ENCODE measurements at regions of chr18 and their contacts with region 1.

Region 1: GRCh38 chr18:77132371-77133050 is at the start of gene MBP:
- DNase-seq: peak; percentile 64 to 79
- ATAC-seq: peak; percentile 43
- H3K4me3 ChIP-seq: peak within 1 kb of the TSS; percentile 76 to 92 (median 87)
- H3K27ac ChIP-seq: peak within 1 kb of the TSS; percentile 92 to 98 (median 95)
- H3K4me1 ChIP-seq: peaks cover 44 to 51% of the 10 kb centered on the region in 2 donors
- H3K27me3 ChIP-seq: no peaks in the 10 kb centered on the region
- CTCF ChIP-seq: no peak
- POLR2A ChIP-seq: peak; percentile 96
- total RNA-seq, gene MBP: 28.6 to 55.0 (median 50.4) TPM

Region 2: DNA sequence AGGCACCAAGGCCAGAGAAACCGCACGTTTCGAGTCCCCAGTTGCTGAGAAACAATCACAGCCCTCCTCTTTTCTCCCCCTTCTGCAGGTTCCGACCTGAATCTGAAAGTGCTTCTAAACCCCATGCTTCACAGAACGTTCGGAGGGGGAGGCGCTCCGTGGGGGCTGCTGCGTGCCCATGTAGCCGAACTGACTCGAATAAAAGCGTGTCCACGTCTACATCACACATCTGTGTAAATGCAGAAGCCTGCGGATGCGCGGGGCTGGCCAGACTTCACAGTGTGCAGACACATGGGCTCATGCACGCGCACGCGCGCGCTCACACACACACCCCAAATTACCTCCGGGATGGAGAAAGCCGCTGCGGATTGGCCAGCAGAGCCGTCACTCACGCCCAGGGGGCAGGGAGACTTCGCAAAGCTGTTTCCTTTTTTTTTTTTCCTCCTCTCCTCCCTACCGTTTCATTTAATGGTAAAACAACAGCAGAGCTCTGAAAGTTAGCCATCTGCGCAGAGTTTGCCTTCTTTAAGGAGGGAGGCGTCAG is 639.8 kb before region 1 on chr18:
- in situ Hi-C with region 1: no loop called
- intact Hi-C with region 1: loop called (anchors 10 kb)
- DNase-seq: peak; percentile 98 to 99
- ATAC-seq: peak; percentile 64 to 67
- H3K4me3 ChIP-seq: peak overlapping the region; percentile 82 to 94 (median 86)
- H3K27ac ChIP-seq: peak overlapping the region; percentile 82 to 99 (median 96)
- H3K4me1 ChIP-seq: peaks cover 28 to 29% of the 10 kb centered on the region in 2 donors
- H3K27me3 ChIP-seq: no peaks in the 10 kb centered on the region
- CTCF ChIP-seq: no peak
- POLR2A ChIP-seq: peak; percentile 56 to 74

Region 3: GRCh38 chr18:77054606-77055428 is 77.7 kb before region 1 on chr18:
- in situ Hi-C with region 1: loop called in 1 of 4 experiments (anchors 10 kb)
- intact Hi-C with region 1: loop called (anchors 2 kb)
- DNase-seq: peak; percentile 73 to 85
- ATAC-seq: peak; percentile 66 to 69
- H3K4me3 ChIP-seq: peak overlapping the region in 1 of 4 donors; percentile 33
- H3K27ac ChIP-seq: peak overlapping the region; percentile 81 to 90 (median 84)
- H3K4me1 ChIP-seq: peaks cover 63 to 64% of the 10 kb centered on the region in 2 donors
- H3K27me3 ChIP-seq: no peaks in the 10 kb centered on the region
- CTCF ChIP-seq: peak; percentile 70 to 83 (median 78)
- POLR2A ChIP-seq: peak in 1 of 2 donors; percentile 13

Region 4: GRCh38 chr18:77067291-77068061 is 65.0 kb before region 1 on chr18:
- in situ Hi-C with region 1: loop called in 1 of 4 experiments (anchors 10 kb)
- intact Hi-C with region 1: loop called (anchors 2 kb)
- DNase-seq: peak; percentile 68 to 74
- ATAC-seq: peak; percentile 83
- H3K4me3 ChIP-seq: no peak overlapping the region
- H3K27ac ChIP-seq: peak overlapping the region; percentile 62 to 81 (median 76)
- H3K4me1 ChIP-seq: peaks cover 40 to 45% of the 10 kb centered on the region in 2 donors
- H3K27me3 ChIP-seq: no peaks in the 10 kb centered on the region
- CTCF ChIP-seq: peak in 2 of 5 experiments; percentile 17 to 31
- POLR2A ChIP-seq: peak; percentile 55 to 69

Region 5: DNA sequence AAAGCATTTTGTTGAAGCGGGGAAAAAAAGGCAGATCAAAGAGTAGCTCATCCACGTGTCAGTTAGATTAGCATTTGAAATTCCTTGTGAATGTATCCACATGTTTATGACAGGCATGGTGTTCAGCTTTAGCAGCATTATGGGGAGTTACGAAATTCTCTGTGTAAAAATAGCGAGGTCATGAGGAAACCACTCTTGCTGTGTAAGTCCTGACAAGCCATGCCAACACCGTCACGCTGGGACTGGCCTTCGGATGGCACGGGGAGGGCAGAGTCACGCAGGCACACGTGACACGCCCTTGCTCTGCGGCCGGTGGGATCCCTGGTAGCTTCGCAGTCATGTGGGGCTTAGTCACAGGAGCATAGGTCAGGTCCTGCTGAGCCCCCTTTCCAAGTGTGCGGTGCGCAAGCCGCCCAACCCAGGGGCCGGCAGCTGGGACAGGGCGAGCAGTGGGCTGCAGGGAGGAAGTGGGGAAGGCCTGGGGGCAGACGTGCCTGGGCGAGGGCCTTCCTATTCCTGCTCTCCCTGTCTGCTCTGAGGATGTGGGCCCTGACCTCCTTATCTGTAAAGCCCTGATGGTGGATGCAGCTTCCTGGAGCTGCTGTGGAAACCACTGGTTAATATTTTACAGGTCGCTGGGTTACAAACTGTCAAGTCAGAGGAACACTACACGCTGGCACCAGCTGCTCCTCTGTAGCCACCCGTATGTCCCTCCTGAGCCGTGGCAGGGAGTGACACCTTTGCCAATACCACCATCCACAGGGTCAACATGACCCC is 17.9 kb before region 1 on chr18:
- in situ Hi-C with region 1: no loop called
- intact Hi-C with region 1: loop called (anchors 2 kb)
- DNase-seq: peak; percentile 99
- ATAC-seq: peak; percentile 95 to 96
- H3K4me3 ChIP-seq: peak overlapping the region; percentile 4 to 46 (median 44)
- H3K27ac ChIP-seq: peak overlapping the region; percentile 88 to 100 (median 98)
- H3K4me1 ChIP-seq: peaks cover 27 to 48% of the 10 kb centered on the region in 2 donors
- H3K27me3 ChIP-seq: no peaks in the 10 kb centered on the region
- CTCF ChIP-seq: peak in 1 of 5 experiments; percentile 53
- POLR2A ChIP-seq: peak; percentile 76 to 87

Region 6: GRCh38 chr18:77191071-77191751 is 58.7 kb after region 1 on chr18:
- in situ Hi-C with region 1: no loop called
- intact Hi-C with region 1: no loop called
- DNase-seq: no peak
- ATAC-seq: no peak
- H3K4me3 ChIP-seq: no peak overlapping the region
- H3K27ac ChIP-seq: no peak overlapping the region
- H3K4me1 ChIP-seq: no peaks in the 10 kb centered on the region
- H3K27me3 ChIP-seq: no peaks in the 10 kb centered on the region
- CTCF ChIP-seq: no peak
- POLR2A ChIP-seq: no peak

Measured in gastrocnemius medialis (tissue), 4 donors.